Spleen (tissue), 13 donors: ENCODE measurements at regions of chr18 and their contacts with region 1.

Region 1: DNA sequence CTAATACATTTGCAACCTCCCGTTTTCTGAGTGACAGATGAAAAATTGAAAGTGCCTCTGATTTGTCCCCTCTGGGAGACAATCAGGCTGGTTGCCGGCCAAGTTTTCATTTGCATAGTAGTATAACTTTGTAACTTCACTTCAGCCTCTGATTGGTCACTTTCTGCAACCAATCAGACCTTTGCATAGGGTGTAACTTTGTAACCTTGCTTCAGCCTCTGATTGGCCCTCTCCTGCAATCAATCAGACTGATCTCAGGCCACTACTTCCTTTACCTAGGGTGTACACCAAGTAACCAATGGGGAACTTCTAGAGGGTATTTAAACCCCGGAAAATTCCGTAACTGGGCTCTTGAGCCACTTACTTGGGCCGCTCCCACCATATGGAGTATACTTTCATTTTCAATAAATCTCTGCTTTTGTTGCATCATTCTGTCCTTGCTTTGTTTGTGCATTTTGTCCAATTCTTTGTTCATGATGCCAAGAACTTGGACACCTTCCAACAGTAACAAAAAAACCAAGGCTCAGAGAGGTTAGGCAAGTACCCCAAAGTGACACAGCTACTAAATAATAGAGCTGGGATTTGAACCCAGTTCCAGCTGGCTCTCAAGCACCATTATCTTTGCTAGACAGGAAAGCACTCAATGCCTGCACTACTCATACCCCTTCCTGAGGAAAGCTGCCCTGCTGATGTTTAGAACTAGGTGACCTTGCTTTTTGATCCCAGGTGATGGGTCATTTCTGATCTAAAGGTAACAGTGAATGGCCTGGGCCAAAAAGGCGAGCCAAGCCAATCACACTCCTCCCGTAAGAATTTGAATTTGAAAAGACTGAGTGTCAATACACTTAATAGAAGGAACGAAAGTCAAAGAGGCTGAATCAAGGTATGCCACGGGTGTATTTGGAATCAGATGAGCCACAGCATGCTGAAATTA is 10.9 kb upstream of the MYOM1 start:
- DNase-seq: no peak
- H3K4me3 ChIP-seq: peak overlapping the region in 1 of 8 donors; percentile 36
- H3K27ac ChIP-seq: peak overlapping the region in 1 of 8 donors; percentile 40
- H3K4me1 ChIP-seq: peaks cover 0 to 10% (median 0%) of the 10 kb centered on the region in 6 donors
- H3K27me3 ChIP-seq: no peaks in the 10 kb centered on the region
- CTCF ChIP-seq: no peak
- POLR2A ChIP-seq: no peak

Region 2: GRCh38 chr18:3177902-3178687 is 52.6 kb before region 1 on chr18:
- intact Hi-C with region 1: loop called (anchors 10 kb)
- DNase-seq: peak; percentile 85
- H3K4me3 ChIP-seq: peak overlapping the region in 1 of 8 donors; percentile 40
- H3K27ac ChIP-seq: peak overlapping the region; percentile 23 to 79 (median 67)
- H3K4me1 ChIP-seq: peaks cover 0 to 23% (median 7%) of the 10 kb centered on the region in 6 donors
- H3K27me3 ChIP-seq: no peaks in the 10 kb centered on the region
- CTCF ChIP-seq: no peak
- POLR2A ChIP-seq: no peak

Region 3: DNA sequence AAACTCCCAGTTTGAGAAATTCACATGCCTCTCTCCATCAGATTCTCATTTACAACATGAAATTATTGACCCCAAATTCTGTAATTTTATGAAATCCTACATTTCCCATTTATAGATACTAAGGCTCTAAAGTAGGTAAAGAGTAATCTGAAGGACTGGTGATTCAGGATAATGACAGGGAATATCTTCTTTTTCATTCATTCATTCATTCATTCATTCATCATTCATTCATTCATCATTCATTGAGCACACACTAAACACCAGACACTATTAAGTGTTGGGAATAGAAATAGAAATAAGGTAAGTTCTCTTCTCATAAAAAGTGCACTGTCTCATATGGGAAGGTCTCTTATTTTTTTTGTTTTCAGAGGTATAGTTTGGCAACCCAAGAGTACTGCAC is 336.2 kb after region 1 on chr18:
- intact Hi-C with region 1: no loop called
- DNase-seq: no peak
- H3K4me3 ChIP-seq: no peak overlapping the region
- H3K27ac ChIP-seq: no peak overlapping the region
- H3K4me1 ChIP-seq: no peaks in the 10 kb centered on the region
- H3K27me3 ChIP-seq: no peaks in the 10 kb centered on the region
- CTCF ChIP-seq: no peak
- POLR2A ChIP-seq: no peak